CD8-positive, alpha-beta T cell (primary cell): ENCODE measurements at regions of chr4 and their contacts with region 1.

Region 1: GRCh38 chr4:1346781-1347409 is at the start of gene UVSSA:
- DNase-seq: peak; percentile 100
- ATAC-seq: peak; percentile 90
- H3K4me3 ChIP-seq: peak within 1 kb of the TSS; percentile 72 to 96
- H3K4me3 Mint-ChIP-seq: peak within 1 kb of the TSS; percentile 89
- H3K27ac ChIP-seq: peak within 1 kb of the TSS; percentile 89 to 92
- H3K27ac Mint-ChIP-seq: peak within 1 kb of the TSS; percentile 95
- H3K4me1 ChIP-seq: peaks cover 23% of the 10 kb centered on the region
- H3K4me1 Mint-ChIP-seq: peaks cover 42% of the 10 kb centered on the region
- H3K27me3 ChIP-seq: no peaks in the 10 kb centered on the region
- H3K27me3 Mint-ChIP-seq: no peaks in the 10 kb centered on the region
- CTCF ChIP-seq: no peak
- total RNA-seq, gene UVSSA: 27.3 to 27.5 TPM

Region 2: GRCh38 chr4:566508-567295 is 780.2 kb before region 1 on chr4:
- CTCF ChIA-PET with region 1: no interaction called
- POLR2A ChIA-PET with region 1: no interaction called
- intact Hi-C with region 1: no loop called
- DNase-seq: peak in 3 of 9 experiments; percentile 19 to 40 (median 22)
- ATAC-seq: no peak
- H3K4me3 ChIP-seq: no peak overlapping the region
- H3K4me3 Mint-ChIP-seq: no peak overlapping the region
- H3K27ac ChIP-seq: no peak overlapping the region
- H3K27ac Mint-ChIP-seq: no peak overlapping the region
- H3K4me1 ChIP-seq: no peaks in the 10 kb centered on the region
- H3K4me1 Mint-ChIP-seq: no peaks in the 10 kb centered on the region
- H3K27me3 ChIP-seq: no peaks in the 10 kb centered on the region
- H3K27me3 Mint-ChIP-seq: peaks cover 32% of the 10 kb centered on the region
- CTCF ChIP-seq: no peak

Region 3: GRCh38 chr4:663438-664428 is 683.2 kb before region 1 on chr4:
- CTCF ChIA-PET with region 1: no interaction called
- POLR2A ChIA-PET with region 1: no interaction called
- intact Hi-C with region 1: loop called in 1 of 2 experiments (anchors 2 kb)
- DNase-seq: peak; percentile 64 to 87 (median 81)
- ATAC-seq: peak; percentile 94
- H3K4me3 ChIP-seq: peak overlapping the region; percentile 72 to 93
- H3K4me3 Mint-ChIP-seq: peak overlapping the region; percentile 83
- H3K27ac ChIP-seq: peak overlapping the region; percentile 74 to 81
- H3K27ac Mint-ChIP-seq: peak overlapping the region; percentile 92
- H3K4me1 ChIP-seq: peaks cover 19% of the 10 kb centered on the region
- H3K4me1 Mint-ChIP-seq: peaks cover 17% of the 10 kb centered on the region
- H3K27me3 ChIP-seq: no peaks in the 10 kb centered on the region
- H3K27me3 Mint-ChIP-seq: no peaks in the 10 kb centered on the region
- CTCF ChIP-seq: no peak

Region 4: GRCh38 chr4:1011022-1011694 is 335.7 kb before region 1 on chr4 and contains the start of gene FGFRL1:
- CTCF ChIA-PET with region 1: no interaction called
- POLR2A ChIA-PET with region 1: no interaction called
- intact Hi-C with region 1: loop called (anchors 1 to 2 kb)
- DNase-seq: peak; percentile 83 to 94 (median 93)
- ATAC-seq: peak; percentile 55
- H3K4me3 ChIP-seq: peak within 1 kb of the TSS; percentile 65 to 86
- H3K4me3 Mint-ChIP-seq: peak within 1 kb of the TSS; percentile 89
- H3K27ac ChIP-seq: peak within 1 kb of the TSS; percentile 65 to 71
- H3K27ac Mint-ChIP-seq: peak within 1 kb of the TSS; percentile 96
- H3K4me1 ChIP-seq: peaks cover 26% of the 10 kb centered on the region
- H3K4me1 Mint-ChIP-seq: peaks cover 12% of the 10 kb centered on the region
- H3K27me3 ChIP-seq: peaks cover 0 to 9% of the 10 kb centered on the region in 2 experiments
- H3K27me3 Mint-ChIP-seq: peaks cover 25% of the 10 kb centered on the region
- CTCF ChIP-seq: no peak
- total RNA-seq, gene FGFRL1: 26.3 to 30.2 TPM

Region 5: GRCh38 chr4:1043658-1044468 is 303.0 kb before region 1 on chr4:
- CTCF ChIA-PET with region 1: no interaction called
- POLR2A ChIA-PET with region 1: no interaction called
- intact Hi-C with region 1: no loop called
- DNase-seq: peak in 2 of 9 experiments; percentile 16 to 41
- ATAC-seq: no peak
- H3K4me3 ChIP-seq: no peak overlapping the region
- H3K4me3 Mint-ChIP-seq: no peak overlapping the region
- H3K27ac ChIP-seq: no peak overlapping the region
- H3K27ac Mint-ChIP-seq: no peak overlapping the region
- H3K4me1 ChIP-seq: no peaks in the 10 kb centered on the region
- H3K4me1 Mint-ChIP-seq: peaks cover 5% of the 10 kb centered on the region
- H3K27me3 ChIP-seq: peaks cover 0 to 10% of the 10 kb centered on the region in 2 experiments
- H3K27me3 Mint-ChIP-seq: peaks cover 29% of the 10 kb centered on the region
- CTCF ChIP-seq: no peak

Region 6: DNA sequence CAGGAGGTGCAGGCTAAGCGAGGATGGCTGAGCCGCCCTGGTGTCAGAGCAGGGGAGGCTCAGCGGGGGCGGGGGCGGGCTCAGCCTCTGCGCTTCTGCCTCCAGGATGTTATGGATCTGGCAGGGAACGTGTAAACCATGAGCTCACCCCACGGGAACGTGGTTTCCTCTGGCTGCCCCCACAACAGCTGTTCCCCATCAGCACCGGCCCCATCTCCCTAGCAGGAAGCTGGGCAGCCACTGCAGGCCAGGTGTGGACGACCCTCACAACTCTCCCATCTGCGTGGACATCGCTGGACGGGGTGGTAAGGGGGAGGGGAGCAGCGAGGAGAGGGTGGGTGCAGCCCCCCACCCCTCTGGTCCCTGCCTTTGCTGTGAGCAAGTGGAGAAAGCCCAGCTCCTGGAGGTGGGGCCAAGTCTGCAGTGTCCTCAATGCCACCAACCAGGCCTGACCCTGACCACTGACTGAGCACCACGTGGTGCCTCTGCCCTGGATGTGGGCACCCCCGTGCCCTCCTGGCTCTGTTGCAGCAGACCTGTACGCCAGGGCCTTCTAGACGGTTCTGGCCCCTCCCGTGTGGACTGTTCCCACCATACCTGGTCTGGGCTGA is 146.4 kb before region 1 on chr4:
- CTCF ChIA-PET with region 1: no interaction called
- POLR2A ChIA-PET with region 1: interaction called, 5 read pairs
- intact Hi-C with region 1: loop called (anchors 1 to 2 kb)
- DNase-seq: peak in 6 of 9 experiments; percentile 25 to 71 (median 54)
- ATAC-seq: no peak
- H3K4me3 ChIP-seq: peak overlapping the region; percentile 69 to 90
- H3K4me3 Mint-ChIP-seq: peak overlapping the region; percentile 87
- H3K27ac ChIP-seq: peak overlapping the region; percentile 87 to 91
- H3K27ac Mint-ChIP-seq: peak overlapping the region; percentile 95
- H3K4me1 ChIP-seq: peaks cover 47% of the 10 kb centered on the region
- H3K4me1 Mint-ChIP-seq: peaks cover 53% of the 10 kb centered on the region
- H3K27me3 ChIP-seq: no peaks in the 10 kb centered on the region
- H3K27me3 Mint-ChIP-seq: no peaks in the 10 kb centered on the region
- CTCF ChIP-seq: no peak

Region 7: GRCh38 chr4:1309261-1310010 is 37.5 kb before region 1 on chr4:
- CTCF ChIA-PET with region 1: interaction called, 3 read pairs
- POLR2A ChIA-PET with region 1: interaction called, 5 read pairs
- intact Hi-C with region 1: loop called in 1 of 2 experiments (anchors 5 kb)
- DNase-seq: peak in 8 of 9 experiments; percentile 39 to 80 (median 66)
- ATAC-seq: peak; percentile 74
- H3K4me3 ChIP-seq: peak overlapping the region; percentile 33 to 49
- H3K4me3 Mint-ChIP-seq: peak overlapping the region; percentile 79
- H3K27ac ChIP-seq: peak overlapping the region in 1 of 2 experiments; percentile 37
- H3K27ac Mint-ChIP-seq: peak overlapping the region; percentile 85
- H3K4me1 ChIP-seq: peaks cover 43% of the 10 kb centered on the region
- H3K4me1 Mint-ChIP-seq: peaks cover 59% of the 10 kb centered on the region
- H3K27me3 ChIP-seq: no peaks in the 10 kb centered on the region
- H3K27me3 Mint-ChIP-seq: no peaks in the 10 kb centered on the region
- CTCF ChIP-seq: no peak

Region 8: GRCh38 chr4:1410491-1411325 is 63.8 kb after region 1 on chr4:
- CTCF ChIA-PET with region 1: no interaction called
- POLR2A ChIA-PET with region 1: no interaction called
- intact Hi-C with region 1: no loop called
- DNase-seq: peak in 8 of 9 experiments; percentile 19 to 63 (median 55)
- ATAC-seq: peak; percentile 80
- H3K4me3 ChIP-seq: no peak overlapping the region
- H3K4me3 Mint-ChIP-seq: no peak overlapping the region
- H3K27ac ChIP-seq: no peak overlapping the region
- H3K27ac Mint-ChIP-seq: no peak overlapping the region
- H3K4me1 ChIP-seq: no peaks in the 10 kb centered on the region
- H3K4me1 Mint-ChIP-seq: peaks cover 7% of the 10 kb centered on the region
- H3K27me3 ChIP-seq: peaks cover 13 to 16% of the 10 kb centered on the region in 2 experiments
- H3K27me3 Mint-ChIP-seq: peaks cover 55% of the 10 kb centered on the region
- CTCF ChIP-seq: no peak

Region 9: DNA sequence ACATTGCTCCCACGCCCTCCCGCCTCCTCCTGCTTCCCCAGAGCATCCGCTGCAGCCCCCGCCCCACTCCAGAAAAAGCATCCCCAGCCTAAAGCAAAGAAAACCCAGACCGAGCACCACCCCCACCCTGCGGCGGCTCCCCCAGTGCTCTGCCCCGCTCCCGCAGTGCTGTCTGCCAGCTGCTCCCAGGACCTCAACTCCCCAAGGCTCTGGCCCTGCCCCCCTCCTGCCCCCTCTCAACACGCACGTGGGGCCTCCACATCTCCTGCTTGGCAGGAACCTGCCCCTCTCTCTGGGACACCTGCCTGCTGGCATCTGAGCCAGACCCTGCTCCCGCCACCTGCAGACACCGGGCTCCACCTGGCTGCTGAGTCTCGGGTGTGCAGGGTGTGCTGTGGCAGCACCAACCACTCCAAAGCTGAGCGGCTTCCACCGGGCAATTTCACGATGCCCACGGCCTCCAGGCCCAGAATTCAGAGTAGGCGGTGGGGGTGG is 257.9 kb after region 1 on chr4:
- CTCF ChIA-PET with region 1: interaction called, 62 read pairs
- POLR2A ChIA-PET with region 1: interaction called, 15 read pairs
- intact Hi-C with region 1: no loop called
- DNase-seq: peak in 7 of 9 experiments; percentile 19 to 77 (median 51)
- ATAC-seq: peak; percentile 79
- H3K4me3 ChIP-seq: peak overlapping the region; percentile 24 to 37
- H3K4me3 Mint-ChIP-seq: peak overlapping the region; percentile 79
- H3K27ac ChIP-seq: peak overlapping the region in 1 of 2 experiments; percentile 41
- H3K27ac Mint-ChIP-seq: peak overlapping the region; percentile 92
- H3K4me1 ChIP-seq: peaks cover 29% of the 10 kb centered on the region
- H3K4me1 Mint-ChIP-seq: peaks cover 27% of the 10 kb centered on the region
- H3K27me3 ChIP-seq: no peaks in the 10 kb centered on the region
- H3K27me3 Mint-ChIP-seq: no peaks in the 10 kb centered on the region
- CTCF ChIP-seq: peak; percentile 31

Region 10: DNA sequence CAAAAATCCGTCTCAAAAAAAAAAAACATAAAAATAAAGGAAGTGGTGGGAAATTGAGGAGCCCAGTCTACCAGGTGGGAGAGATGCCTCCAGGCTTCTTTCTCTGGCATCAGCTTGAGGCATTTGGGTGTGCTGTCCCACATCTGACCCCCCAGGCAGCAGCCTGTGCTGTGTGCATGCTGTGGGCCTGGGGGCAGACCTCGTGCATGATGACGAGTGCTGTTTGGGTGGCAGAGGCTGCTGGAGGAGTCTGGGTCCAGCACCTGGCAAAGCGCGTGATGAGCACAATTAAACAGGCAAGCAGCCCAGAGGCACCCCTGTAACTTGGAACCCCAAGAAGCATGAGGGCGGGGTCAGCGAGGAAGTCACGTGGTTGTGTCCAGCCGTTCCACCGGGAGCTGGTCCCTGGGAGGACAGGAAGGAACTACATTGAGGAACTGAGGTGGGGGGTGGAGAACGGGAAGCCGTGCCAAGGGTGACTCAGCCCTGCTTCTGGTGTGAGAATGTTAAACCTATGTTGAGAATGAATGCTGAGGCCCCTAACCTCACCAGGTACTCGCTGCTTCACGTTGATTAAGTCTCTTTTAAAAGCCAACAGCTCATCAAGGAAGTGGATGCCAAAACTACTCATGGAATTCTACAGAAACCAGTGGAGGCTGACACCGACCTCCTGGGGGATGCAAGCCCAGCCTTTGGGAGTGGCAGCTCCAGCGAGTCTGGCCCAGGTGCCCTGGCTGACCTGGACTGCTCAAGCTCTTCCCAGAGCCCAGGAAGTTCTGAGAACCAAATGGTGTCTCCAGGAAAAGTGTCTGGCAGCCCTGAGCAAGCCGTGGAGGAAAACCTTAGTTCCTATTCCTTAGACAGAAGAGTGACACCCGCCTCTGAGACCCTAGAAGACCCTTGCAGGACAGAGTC is 380.5 kb after region 1 on chr4:
- CTCF ChIA-PET with region 1: no interaction called
- POLR2A ChIA-PET with region 1: no interaction called
- intact Hi-C with region 1: no loop called
- DNase-seq: peak in 1 of 9 experiments; percentile 20
- ATAC-seq: no peak
- H3K4me3 ChIP-seq: no peak overlapping the region
- H3K4me3 Mint-ChIP-seq: no peak overlapping the region
- H3K27ac ChIP-seq: no peak overlapping the region
- H3K27ac Mint-ChIP-seq: no peak overlapping the region
- H3K4me1 ChIP-seq: peaks cover 50% of the 10 kb centered on the region
- H3K4me1 Mint-ChIP-seq: peaks cover 55% of the 10 kb centered on the region
- H3K27me3 ChIP-seq: no peaks in the 10 kb centered on the region
- H3K27me3 Mint-ChIP-seq: no peaks in the 10 kb centered on the region
- CTCF ChIP-seq: no peak

Region 11: GRCh38 chr4:2008875-2009703 is 662.2 kb after region 1 on chr4 and contains the start of gene NELFA:
- CTCF ChIA-PET with region 1: no interaction called
- POLR2A ChIA-PET with region 1: no interaction called
- intact Hi-C with region 1: loop called in 1 of 2 experiments (anchors 2 kb)
- DNase-seq: peak; percentile 86 to 98 (median 96)
- ATAC-seq: peak; percentile 83
- H3K4me3 ChIP-seq: peak within 1 kb of the TSS; percentile 96 to 100
- H3K4me3 Mint-ChIP-seq: peak within 1 kb of the TSS; percentile 92
- H3K27ac ChIP-seq: peak within 1 kb of the TSS; percentile 98 to 99
- H3K27ac Mint-ChIP-seq: peak within 1 kb of the TSS; percentile 96
- H3K4me1 ChIP-seq: peaks cover 18% of the 10 kb centered on the region
- H3K4me1 Mint-ChIP-seq: peaks cover 32% of the 10 kb centered on the region
- H3K27me3 ChIP-seq: no peaks in the 10 kb centered on the region
- H3K27me3 Mint-ChIP-seq: no peaks in the 10 kb centered on the region
- CTCF ChIP-seq: no peak
- total RNA-seq, gene NELFA: 39.0 to 45.8 TPM